K562 (cell line): ENCODE measurements at regions of chr16 and their contacts with region 1.

Region 1: GRCh38 chr16:81481207-81481821 is 36.7 kb downstream of the CMIP start:
- DNase-seq: peak; percentile 54 to 91 (median 70)
- ATAC-seq: peak; percentile 77
- H3K4me3 ChIP-seq: no peak overlapping the region
- H3K27ac ChIP-seq: peak overlapping the region; percentile 77
- H3K4me1 ChIP-seq: peaks cover 61 to 80% of the 10 kb centered on the region in 2 experiments
- H3K27me3 ChIP-seq: no peaks in the 10 kb centered on the region
- CTCF ChIP-seq: peak; percentile 14 to 35 (median 21); a peak in 3 of 6 replicates
- EP300 ChIP-seq: peak; percentile 88
- POLR2A ChIP-seq: no peak
- RAD21 ChIP-seq: peak; percentile 64 to 69

Region 2: GRCh38 chr16:81444448-81445121 is 36.7 kb before region 1 on chr16 and contains the start of gene CMIP:
- CTCF ChIA-PET with region 1: no interaction called
- POLR2A ChIA-PET with region 1: interaction called, 3 read pairs
- in situ Hi-C with region 1: no loop called
- intact Hi-C with region 1: loop called (anchors 5 kb)
- DNase-seq: peak; percentile 92 to 99 (median 98)
- ATAC-seq: peak; percentile 75
- H3K4me3 ChIP-seq: peak within 1 kb of the TSS; percentile 54
- H3K27ac ChIP-seq: peak within 1 kb of the TSS; percentile 70
- H3K4me1 ChIP-seq: peaks cover 32 to 43% of the 10 kb centered on the region in 2 experiments
- H3K27me3 ChIP-seq: peaks cover 32 to 41% of the 10 kb centered on the region in 2 experiments
- CTCF ChIP-seq: no peak
- EP300 ChIP-seq: no peak
- POLR2A ChIP-seq: no peak
- RAD21 ChIP-seq: no peak
- polyA plus RNA-seq, gene CMIP: 0.94 to 1.9 TPM